A673 (cell line): ENCODE measurements at regions of chr15 and their contacts with region 1.

Region 1: GRCh38 chr15:98177924-98178592 is 217.6 kb downstream of the ARRDC4 start:
- DNase-seq: peak; percentile 83
- H3K4me3 ChIP-seq: no peak overlapping the region
- H3K27ac ChIP-seq: no peak overlapping the region
- H3K4me1 ChIP-seq: no peaks in the 10 kb centered on the region
- H3K27me3 ChIP-seq: peaks cover 37% of the 10 kb centered on the region
- CTCF ChIP-seq: peak; percentile 81

Region 2: GRCh38 chr15:97903971-97904572 is 274.0 kb before region 1 on chr15:
- CTCF ChIA-PET with region 1: interaction called, 8 read pairs
- POLR2A ChIA-PET with region 1: no interaction called
- intact Hi-C with region 1: loop called (anchors 1 kb)
- DNase-seq: peak; percentile 83
- H3K4me3 ChIP-seq: no peak overlapping the region
- H3K27ac ChIP-seq: no peak overlapping the region
- H3K4me1 ChIP-seq: peaks cover 2% of the 10 kb centered on the region
- H3K27me3 ChIP-seq: peaks cover 8% of the 10 kb centered on the region
- CTCF ChIP-seq: peak; percentile 88

Region 3: GRCh38 chr15:98085003-98085639 is 92.9 kb before region 1 on chr15:
- CTCF ChIA-PET with region 1: no interaction called
- POLR2A ChIA-PET with region 1: no interaction called
- intact Hi-C with region 1: loop called (anchors 5 kb)
- DNase-seq: peak; percentile 73
- H3K4me3 ChIP-seq: no peak overlapping the region
- H3K27ac ChIP-seq: no peak overlapping the region
- H3K4me1 ChIP-seq: no peaks in the 10 kb centered on the region
- H3K27me3 ChIP-seq: no peaks in the 10 kb centered on the region
- CTCF ChIP-seq: peak; percentile 74

Region 4: DNA sequence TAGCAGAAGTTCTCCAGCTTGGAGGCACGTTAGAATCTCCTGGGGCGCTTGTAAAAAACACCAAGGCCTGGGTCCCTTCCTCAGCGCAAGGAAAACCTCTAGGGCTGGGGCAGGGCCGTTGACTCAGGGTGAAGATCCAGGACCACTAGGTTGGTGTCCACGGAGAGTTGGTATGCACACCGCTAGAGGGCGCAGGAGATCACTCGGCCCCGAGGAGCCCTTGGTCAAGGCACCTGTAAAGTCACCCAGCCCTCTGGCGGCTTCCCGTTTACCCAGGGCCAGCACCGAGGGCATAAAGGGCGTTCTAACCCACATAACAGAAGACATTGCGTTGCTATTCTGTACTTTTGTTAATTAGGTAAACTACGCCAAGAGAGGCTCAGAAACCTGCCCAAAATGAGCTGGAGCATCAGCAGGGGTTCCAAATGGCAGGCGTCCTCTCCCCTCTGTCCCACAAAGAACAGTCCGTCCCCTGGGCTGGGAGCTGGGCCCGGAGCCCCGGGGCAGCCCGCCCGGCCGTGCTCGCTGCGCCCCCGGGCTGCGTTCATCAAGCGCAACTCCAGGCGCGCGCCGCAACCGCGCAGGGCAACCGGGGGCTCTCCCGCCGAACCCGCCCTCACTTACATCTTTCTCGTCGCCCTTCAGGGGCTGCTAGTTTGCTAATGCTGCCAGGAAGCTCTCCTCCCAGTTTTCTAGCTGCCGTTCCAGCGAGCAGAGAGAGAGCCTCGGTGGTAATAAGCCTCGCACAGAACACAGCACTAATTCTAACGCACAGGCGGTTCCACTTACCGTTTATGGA is 114.6 kb after region 1 on chr15:
- CTCF ChIA-PET with region 1: no interaction called
- POLR2A ChIA-PET with region 1: no interaction called
- intact Hi-C with region 1: loop called (anchors 5 kb)
- DNase-seq: peak; percentile 44
- H3K4me3 ChIP-seq: peak overlapping the region; percentile 33
- H3K27ac ChIP-seq: no peak overlapping the region
- H3K4me1 ChIP-seq: peaks cover 13% of the 10 kb centered on the region
- H3K27me3 ChIP-seq: peaks cover 30% of the 10 kb centered on the region
- CTCF ChIP-seq: peak; percentile 88